ENCODE measurements at regions of chr12 and their contacts with region 1.

Region 1: GRCh38 chr12:52156736-52157565 is 34.9 kb downstream of the KRT80 start:
- DNase-seq: peak; percentile 67
- H3K4me3 Mint-ChIP-seq: no peak overlapping the region
- H3K27ac Mint-ChIP-seq: no peak overlapping the region
- H3K4me1 Mint-ChIP-seq: peaks cover 22% of the 10 kb centered on the region
- H3K27me3 Mint-ChIP-seq: no peaks in the 10 kb centered on the region

Region 2: DNA sequence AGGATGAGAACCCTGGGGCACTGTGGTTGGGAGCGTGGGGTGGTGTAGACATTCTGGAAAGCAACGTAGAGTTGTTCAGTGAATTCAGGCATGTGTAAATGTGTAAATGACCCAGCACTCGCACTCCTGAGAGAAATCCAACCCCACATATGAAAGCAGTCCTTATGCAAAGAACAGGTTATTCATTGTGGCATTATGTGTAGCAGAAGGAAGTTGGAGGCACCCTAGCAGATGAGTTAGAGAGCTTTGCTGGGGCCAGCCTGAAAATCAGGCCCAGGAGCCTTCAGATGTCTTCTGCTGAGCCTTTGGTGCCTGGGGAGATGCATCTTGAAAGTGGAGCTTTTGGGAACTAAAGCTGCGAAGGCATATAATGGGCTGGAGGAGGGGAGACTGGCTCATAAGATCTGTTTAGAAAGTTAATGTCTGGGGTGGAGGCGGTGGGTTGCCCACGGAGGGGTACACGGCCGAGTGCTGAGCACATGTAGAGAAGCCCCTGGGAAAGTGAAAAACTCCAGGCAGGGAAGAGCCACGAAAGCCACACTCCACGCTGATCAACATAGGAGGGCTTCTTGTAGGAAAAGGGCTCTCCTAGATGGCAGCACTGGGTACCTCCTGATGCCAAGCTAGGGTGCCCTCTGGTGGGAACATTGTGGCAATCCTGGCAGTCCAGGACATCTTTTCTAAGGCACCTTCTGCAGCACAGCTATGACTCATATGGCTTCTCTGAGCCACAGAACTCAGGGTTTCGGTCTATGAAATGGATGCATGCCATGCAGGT is 170.3 kb after region 1 on chr12:
- intact Hi-C with region 1: loop called (anchors 1 kb)
- DNase-seq: peak; percentile 63
- H3K4me3 Mint-ChIP-seq: no peak overlapping the region
- H3K27ac Mint-ChIP-seq: no peak overlapping the region
- H3K4me1 Mint-ChIP-seq: peaks cover 14% of the 10 kb centered on the region
- H3K27me3 Mint-ChIP-seq: peaks cover 29% of the 10 kb centered on the region

Region 3: GRCh38 chr12:52372216-52373154 is 215.5 kb after region 1 on chr12:
- intact Hi-C with region 1: loop called (anchors 5 kb)
- DNase-seq: peak; percentile 14
- H3K4me3 Mint-ChIP-seq: no peak overlapping the region
- H3K27ac Mint-ChIP-seq: no peak overlapping the region
- H3K4me1 Mint-ChIP-seq: no peaks in the 10 kb centered on the region
- H3K27me3 Mint-ChIP-seq: peaks cover 19% of the 10 kb centered on the region

Region 4: GRCh38 chr12:52506858-52507715 is 350.1 kb after region 1 on chr12:
- intact Hi-C with region 1: loop called (anchors 1 kb)
- DNase-seq: no peak
- H3K4me3 Mint-ChIP-seq: no peak overlapping the region
- H3K27ac Mint-ChIP-seq: no peak overlapping the region
- H3K4me1 Mint-ChIP-seq: no peaks in the 10 kb centered on the region
- H3K27me3 Mint-ChIP-seq: peaks cover 21% of the 10 kb centered on the region

Region 5: GRCh38 chr12:52879394-52880351 is 722.7 kb after region 1 on chr12:
- intact Hi-C with region 1: loop called (anchors 1 kb)
- DNase-seq: peak; percentile 69
- H3K4me3 Mint-ChIP-seq: peak overlapping the region; percentile 72
- H3K27ac Mint-ChIP-seq: no peak overlapping the region
- H3K4me1 Mint-ChIP-seq: peaks cover 9% of the 10 kb centered on the region
- H3K27me3 Mint-ChIP-seq: peaks cover 13% of the 10 kb centered on the region

Region 6: GRCh38 chr12:52980693-52981423 is 823.9 kb after region 1 on chr12:
- intact Hi-C with region 1: loop called (anchors 5 kb)
- DNase-seq: peak; percentile 73
- H3K4me3 Mint-ChIP-seq: no peak overlapping the region
- H3K27ac Mint-ChIP-seq: no peak overlapping the region
- H3K4me1 Mint-ChIP-seq: no peaks in the 10 kb centered on the region
- H3K27me3 Mint-ChIP-seq: peaks cover 29% of the 10 kb centered on the region